Activated B cell treated with CpG ODN at 0.5 μM for 24 hours (primary cell): ENCODE measurements at regions of chr6 and their contacts with region 1.

Region 1: GRCh38 chr6:42745707-42746462 is at the start of gene TBCC:
- DNase-seq: peak; percentile 72
- ATAC-seq: peak; percentile 75
- H3K4me3 Mint-ChIP-seq: peak within 1 kb of the TSS; percentile 100
- H3K27ac Mint-ChIP-seq: peak within 1 kb of the TSS; percentile 100
- H3K4me1 Mint-ChIP-seq: peaks cover 32% of the 10 kb centered on the region
- H3K27me3 Mint-ChIP-seq: no peaks in the 10 kb centered on the region
- CTCF ChIP-seq: no peak
- total RNA-seq, gene TBCC: 41.5 and 41.7 TPM in 2 replicates

Region 2: GRCh38 chr6:41787219-41787917 is 958.5 kb before region 1 on chr6 and contains the start of gene TOMM6:
- CTCF ChIA-PET with region 1: no interaction called
- POLR2A ChIA-PET with region 1: interaction called, 4 read pairs
- intact Hi-C with region 1: loop called (anchors 1 kb)
- DNase-seq: peak; percentile 91
- ATAC-seq: peak; percentile 83
- H3K4me3 Mint-ChIP-seq: peak within 1 kb of the TSS; percentile 97
- H3K27ac Mint-ChIP-seq: peak within 1 kb of the TSS; percentile 97
- H3K4me1 Mint-ChIP-seq: peaks cover 28% of the 10 kb centered on the region
- H3K27me3 Mint-ChIP-seq: no peaks in the 10 kb centered on the region
- CTCF ChIP-seq: peak; percentile 66
- total RNA-seq, gene TOMM6: 219 and 252 TPM in 2 replicates

Region 3: DNA sequence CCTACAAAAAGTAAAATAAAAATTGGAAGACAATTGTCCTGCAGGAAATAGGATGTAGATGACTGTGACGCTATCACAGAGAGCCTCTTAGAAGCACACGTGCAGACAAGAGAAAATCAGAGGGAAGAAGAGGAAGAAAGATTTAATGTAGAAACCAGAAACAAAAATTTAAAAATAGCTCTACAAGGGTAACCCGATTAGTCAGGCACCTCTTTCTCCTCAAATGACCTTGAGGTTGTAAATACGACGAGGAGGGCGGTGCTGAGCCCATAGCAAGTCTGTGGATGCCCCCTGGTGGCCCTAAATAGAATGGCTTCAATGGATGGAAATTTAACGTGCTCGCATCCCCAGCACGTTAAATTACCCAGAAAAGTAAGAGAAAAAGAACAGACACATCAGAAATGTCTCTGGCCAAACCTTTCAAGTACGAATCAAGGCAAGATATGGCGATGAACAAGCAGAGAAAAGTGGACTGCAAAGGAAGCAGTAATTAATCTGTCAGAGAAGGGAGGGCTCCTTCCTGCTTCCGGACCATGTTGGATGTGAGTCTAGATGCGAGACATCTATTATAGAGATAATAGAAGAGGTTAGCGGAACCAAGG is 19.3 kb before region 1 on chr6:
- CTCF ChIA-PET with region 1: interaction called, 10 read pairs
- POLR2A ChIA-PET with region 1: interaction called, 109 read pairs
- intact Hi-C with region 1: loop called (anchors 1 kb)
- DNase-seq: no peak
- ATAC-seq: peak; percentile 98
- H3K4me3 Mint-ChIP-seq: peak overlapping the region; percentile 89
- H3K27ac Mint-ChIP-seq: peak overlapping the region; percentile 96
- H3K4me1 Mint-ChIP-seq: peaks cover 19% of the 10 kb centered on the region
- H3K27me3 Mint-ChIP-seq: no peaks in the 10 kb centered on the region
- CTCF ChIP-seq: peak; percentile 84

Region 4: GRCh38 chr6:42782622-42783176 is 36.8 kb after region 1 on chr6:
- CTCF ChIA-PET with region 1: interaction called, 3 read pairs
- POLR2A ChIA-PET with region 1: interaction called, 1,220 read pairs
- intact Hi-C with region 1: loop called (anchors 1 kb)
- DNase-seq: peak; percentile 62
- ATAC-seq: peak; percentile 40
- H3K4me3 Mint-ChIP-seq: peak overlapping the region; percentile 97
- H3K27ac Mint-ChIP-seq: peak overlapping the region; percentile 100
- H3K4me1 Mint-ChIP-seq: peaks cover 36% of the 10 kb centered on the region
- H3K27me3 Mint-ChIP-seq: no peaks in the 10 kb centered on the region
- CTCF ChIP-seq: no peak

Region 5: DNA sequence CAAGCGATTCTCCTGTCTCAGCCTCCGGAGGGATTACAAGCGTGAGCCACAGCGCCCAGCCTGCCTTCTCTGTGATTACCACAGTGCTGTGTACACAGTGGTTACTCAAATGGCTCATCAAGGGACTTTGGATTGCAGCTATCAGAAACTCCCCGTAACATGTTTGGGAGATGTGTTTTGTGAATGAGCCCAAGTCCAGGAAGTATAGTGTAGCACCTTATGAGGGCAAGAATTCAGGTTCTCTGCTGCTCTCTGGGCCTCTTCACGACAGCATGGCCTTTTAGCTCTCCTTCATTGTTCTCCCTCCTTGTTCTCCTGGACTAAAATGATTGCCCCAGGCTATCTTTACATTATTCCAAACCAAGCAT is 99.4 kb after region 1 on chr6:
- CTCF ChIA-PET with region 1: no interaction called
- POLR2A ChIA-PET with region 1: interaction called, 18 read pairs
- intact Hi-C with region 1: no loop called
- DNase-seq: no peak
- ATAC-seq: no peak
- H3K4me3 Mint-ChIP-seq: no peak overlapping the region
- H3K27ac Mint-ChIP-seq: no peak overlapping the region
- H3K4me1 Mint-ChIP-seq: peaks cover 7% of the 10 kb centered on the region
- H3K27me3 Mint-ChIP-seq: no peaks in the 10 kb centered on the region
- CTCF ChIP-seq: no peak

Region 6: GRCh38 chr6:42928986-42929820 is 183.3 kb after region 1 on chr6 and contains the start of gene CNPY3:
- CTCF ChIA-PET with region 1: no interaction called
- POLR2A ChIA-PET with region 1: interaction called, 48 read pairs
- intact Hi-C with region 1: loop called (anchors 1 kb)
- DNase-seq: peak; percentile 84
- ATAC-seq: peak; percentile 74
- H3K4me3 Mint-ChIP-seq: peak within 1 kb of the TSS; percentile 97
- H3K27ac Mint-ChIP-seq: peak within 1 kb of the TSS; percentile 97
- H3K4me1 Mint-ChIP-seq: peaks cover 58% of the 10 kb centered on the region
- H3K27me3 Mint-ChIP-seq: no peaks in the 10 kb centered on the region
- CTCF ChIP-seq: no peak
- total RNA-seq, gene CNPY3: 120 and 121 TPM in 2 replicates

Region 7: DNA sequence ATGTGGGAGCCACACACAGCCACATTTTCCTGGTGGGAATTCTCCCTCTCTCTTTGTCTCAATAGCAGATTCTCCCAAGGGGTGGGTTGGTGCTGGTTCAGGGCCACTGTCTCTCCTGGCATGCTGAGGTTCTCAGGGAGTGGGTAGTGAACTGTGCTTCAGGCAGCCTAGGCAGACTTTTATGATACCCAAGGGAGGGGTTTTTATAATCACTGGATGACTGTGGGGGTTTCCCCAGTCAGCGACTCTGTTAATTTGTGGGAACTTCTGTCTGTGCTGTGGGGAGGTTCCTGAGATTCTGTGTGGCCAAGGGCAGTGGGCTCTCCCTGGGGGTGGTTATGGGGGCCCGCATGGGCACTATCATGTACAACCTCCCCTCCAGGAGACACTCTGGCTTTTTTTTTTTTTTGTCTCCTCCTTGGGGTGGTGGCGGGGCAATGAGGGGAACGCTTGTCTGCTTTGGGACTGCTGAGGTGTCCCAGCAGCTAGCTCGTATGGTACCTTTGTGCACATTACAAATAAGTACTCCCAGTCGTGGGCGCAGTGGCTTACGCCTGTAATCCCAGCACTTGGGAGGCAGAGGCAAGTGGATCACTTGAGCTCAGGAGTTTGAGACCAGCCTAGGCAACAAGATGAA is 340.3 kb after region 1 on chr6:
- CTCF ChIA-PET with region 1: no interaction called
- POLR2A ChIA-PET with region 1: no interaction called
- intact Hi-C with region 1: no loop called
- DNase-seq: no peak
- ATAC-seq: peak; percentile 95
- H3K4me3 Mint-ChIP-seq: no peak overlapping the region
- H3K27ac Mint-ChIP-seq: no peak overlapping the region
- H3K4me1 Mint-ChIP-seq: peaks cover 6% of the 10 kb centered on the region
- H3K27me3 Mint-ChIP-seq: peaks cover 5% of the 10 kb centered on the region
- CTCF ChIP-seq: no peak

Region 8: GRCh38 chr6:43951063-43951755 is 1205.3 kb after region 1 on chr6:
- CTCF ChIA-PET with region 1: no interaction called
- POLR2A ChIA-PET with region 1: no interaction called
- intact Hi-C with region 1: no loop called
- DNase-seq: no peak
- ATAC-seq: no peak
- H3K4me3 Mint-ChIP-seq: no peak overlapping the region
- H3K27ac Mint-ChIP-seq: no peak overlapping the region
- H3K4me1 Mint-ChIP-seq: no peaks in the 10 kb centered on the region
- H3K27me3 Mint-ChIP-seq: peaks cover 18% of the 10 kb centered on the region
- CTCF ChIP-seq: no peak